ENCODE measurements at regions of chr4 and their contacts with region 1.

Region 1: DNA sequence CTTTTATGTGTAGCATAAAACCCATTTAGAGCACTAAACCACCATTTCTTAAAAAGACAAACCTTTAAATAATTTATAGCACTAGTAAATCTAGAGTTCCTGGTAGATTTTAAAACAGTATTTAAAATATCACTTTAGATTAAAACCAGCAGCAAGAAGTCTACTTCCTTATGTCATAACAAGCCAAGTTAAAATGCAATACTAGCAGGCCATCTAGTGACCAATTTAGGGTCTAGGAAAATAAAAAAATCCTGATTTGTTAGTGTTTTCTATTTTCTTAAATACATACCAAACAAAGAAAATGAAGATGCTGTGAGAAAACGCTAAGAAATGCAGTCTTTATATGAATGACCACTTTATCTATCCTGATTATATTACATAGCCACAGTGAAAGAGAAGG is 53.9 kb downstream of the PAPSS1 start:
- DNase-seq: no peak
- H3K4me3 ChIP-seq: no peak overlapping the region
- H3K27ac ChIP-seq: no peak overlapping the region
- H3K4me1 ChIP-seq: peaks cover 2% of the 10 kb centered on the region
- H3K27me3 ChIP-seq: no peaks in the 10 kb centered on the region
- CTCF ChIP-seq: peak in 3 of 4 experiments; percentile 53 to 60 (median 60)
- POLR2A ChIP-seq: no peak

Region 2: DNA sequence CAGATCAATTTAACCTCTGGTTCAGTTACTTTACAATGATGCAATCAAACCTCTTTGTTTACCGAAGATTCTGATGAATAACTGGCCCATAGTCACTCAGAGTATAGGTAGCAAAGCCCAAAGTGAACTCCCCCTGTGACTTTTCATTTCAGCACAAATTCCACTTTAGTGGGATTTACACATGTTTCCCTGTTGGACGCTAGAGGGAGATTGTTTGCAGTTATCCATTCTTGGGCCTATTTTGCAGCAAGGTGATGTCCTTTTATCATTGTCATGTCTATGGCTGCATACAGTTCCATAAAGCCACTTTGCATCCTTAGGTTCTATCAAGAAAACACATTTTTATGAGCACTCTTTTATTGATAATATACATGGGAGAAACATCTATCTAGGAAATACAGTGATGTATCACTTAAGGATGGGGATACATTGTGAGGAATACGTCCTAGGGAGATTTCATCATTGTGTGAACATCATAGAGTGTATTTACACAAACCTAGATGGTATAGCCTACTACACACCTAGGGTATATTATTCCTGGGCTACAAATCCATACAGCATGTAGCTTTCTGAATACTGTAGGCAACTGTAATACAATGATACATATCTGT is 615.5 kb before region 1 on chr4:
- intact Hi-C with region 1: loop called (anchors 5 kb)
- DNase-seq: no peak
- H3K4me3 ChIP-seq: no peak overlapping the region
- H3K27ac ChIP-seq: no peak overlapping the region
- H3K4me1 ChIP-seq: no peaks in the 10 kb centered on the region
- H3K27me3 ChIP-seq: no peaks in the 10 kb centered on the region
- CTCF ChIP-seq: peak; percentile 13 to 26 (median 20)
- POLR2A ChIP-seq: no peak

Region 3: DNA sequence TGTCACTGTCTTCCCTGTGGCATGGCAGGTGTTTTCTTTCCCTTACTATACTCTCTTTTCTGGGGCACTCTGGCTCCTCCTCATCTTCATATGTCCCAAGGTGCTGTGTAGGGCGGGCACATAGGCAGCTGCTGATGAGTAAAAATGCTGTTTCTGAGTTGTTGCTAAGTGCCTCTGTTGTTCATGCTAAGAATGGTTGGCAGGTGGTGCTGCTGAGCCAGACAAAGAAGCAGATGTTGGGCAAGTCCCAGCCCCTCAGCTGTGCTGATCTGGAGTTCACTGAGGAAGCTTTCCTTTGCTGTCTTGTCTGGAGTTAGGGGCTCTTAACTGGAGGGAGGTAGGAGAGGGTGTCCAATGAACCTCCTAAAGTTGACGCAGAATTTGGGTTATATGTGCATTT is 364.2 kb after region 1 on chr4:
- intact Hi-C with region 1: no loop called
- DNase-seq: no peak
- H3K4me3 ChIP-seq: no peak overlapping the region
- H3K27ac ChIP-seq: no peak overlapping the region
- H3K4me1 ChIP-seq: no peaks in the 10 kb centered on the region
- H3K27me3 ChIP-seq: no peaks in the 10 kb centered on the region
- CTCF ChIP-seq: peak in 1 of 4 experiments; percentile 31
- POLR2A ChIP-seq: no peak

Region 4: GRCh38 chr4:108581083-108581482 is 914.9 kb after region 1 on chr4:
- intact Hi-C with region 1: no loop called
- DNase-seq: no peak
- H3K4me3 ChIP-seq: no peak overlapping the region
- H3K27ac ChIP-seq: no peak overlapping the region
- H3K4me1 ChIP-seq: no peaks in the 10 kb centered on the region
- H3K27me3 ChIP-seq: no peaks in the 10 kb centered on the region
- CTCF ChIP-seq: no peak
- POLR2A ChIP-seq: no peak

Measured in prostate gland (tissue), 2 donors.